CD8-positive, alpha-beta memory T cell (primary cell): ENCODE measurements at regions of chr15 and their contacts with region 1.

Region 1: GRCh38 chr15:40906091-40906990 is 12.1 kb downstream of the VPS18 start:
- DNase-seq: peak; percentile 63 to 77 (median 70)
- H3K4me3 ChIP-seq: peak overlapping the region; percentile 84
- H3K4me3 Mint-ChIP-seq: peak overlapping the region; percentile 81 to 91 (median 86)
- H3K27ac ChIP-seq: peak overlapping the region; percentile 59
- H3K27ac Mint-ChIP-seq: peak overlapping the region in 7 of 8 donors; percentile 35 to 95 (median 90)
- H3K4me1 ChIP-seq: peaks cover 26% of the 10 kb centered on the region
- H3K4me1 Mint-ChIP-seq: peaks cover 12 to 48% (median 25%) of the 10 kb centered on the region in 3 donors
- H3K27me3 ChIP-seq: no peaks in the 10 kb centered on the region
- H3K27me3 Mint-ChIP-seq: peaks cover 0 to 2% of the 10 kb centered on the region in 2 donors

Region 2: DNA sequence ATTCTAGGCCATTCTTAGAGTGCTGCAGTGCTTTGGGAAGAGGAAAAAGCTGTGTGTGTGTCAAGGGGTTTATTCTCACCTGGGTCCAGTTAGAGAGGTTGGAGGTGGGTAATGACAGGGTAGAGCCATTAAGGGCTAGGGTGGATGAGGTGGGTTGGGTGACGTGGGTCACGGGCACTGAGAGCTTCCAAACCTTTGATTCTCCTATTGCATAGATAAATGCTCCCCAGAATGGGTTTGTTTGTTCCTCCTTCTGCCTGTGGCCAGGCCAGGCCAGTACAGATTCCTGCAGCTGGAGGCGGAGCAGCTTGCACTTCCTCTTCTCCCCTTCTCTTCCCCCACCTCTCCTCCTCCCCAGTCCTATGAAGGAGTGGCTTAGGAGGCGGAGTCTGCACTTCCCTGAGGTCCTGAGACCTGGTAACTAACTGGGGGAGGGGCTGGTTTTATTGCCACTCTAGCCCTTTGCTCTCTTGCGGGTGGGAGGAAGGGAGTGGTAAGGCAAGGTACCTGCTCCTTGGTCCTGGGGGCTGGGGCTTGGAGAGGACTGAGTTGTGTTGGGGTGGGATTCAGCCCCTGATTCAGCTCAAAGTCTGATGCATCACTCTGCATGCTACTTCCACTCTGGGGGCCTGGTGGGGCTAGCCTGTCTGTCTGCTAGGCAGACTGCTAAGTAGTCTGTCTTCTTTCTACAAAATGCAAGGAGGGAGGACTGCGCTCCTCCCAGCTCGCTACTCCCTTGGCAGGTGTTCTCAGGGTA is 59.0 kb before region 1 on chr15:
- CTCF ChIA-PET with region 1: no interaction called
- POLR2A ChIA-PET with region 1: no interaction called
- DNase-seq: no peak
- H3K4me3 ChIP-seq: no peak overlapping the region
- H3K4me3 Mint-ChIP-seq: peak overlapping the region in 2 of 7 donors; percentile 25 to 71
- H3K27ac ChIP-seq: peak overlapping the region; percentile 59
- H3K27ac Mint-ChIP-seq: peak overlapping the region in 2 of 8 donors; percentile 36 to 91
- H3K4me1 ChIP-seq: peaks cover 17% of the 10 kb centered on the region
- H3K4me1 Mint-ChIP-seq: peaks cover 5 to 26% (median 11%) of the 10 kb centered on the region in 3 donors
- H3K27me3 ChIP-seq: no peaks in the 10 kb centered on the region
- H3K27me3 Mint-ChIP-seq: peaks cover 11% of the 10 kb centered on the region in 2 donors

Region 3: DNA sequence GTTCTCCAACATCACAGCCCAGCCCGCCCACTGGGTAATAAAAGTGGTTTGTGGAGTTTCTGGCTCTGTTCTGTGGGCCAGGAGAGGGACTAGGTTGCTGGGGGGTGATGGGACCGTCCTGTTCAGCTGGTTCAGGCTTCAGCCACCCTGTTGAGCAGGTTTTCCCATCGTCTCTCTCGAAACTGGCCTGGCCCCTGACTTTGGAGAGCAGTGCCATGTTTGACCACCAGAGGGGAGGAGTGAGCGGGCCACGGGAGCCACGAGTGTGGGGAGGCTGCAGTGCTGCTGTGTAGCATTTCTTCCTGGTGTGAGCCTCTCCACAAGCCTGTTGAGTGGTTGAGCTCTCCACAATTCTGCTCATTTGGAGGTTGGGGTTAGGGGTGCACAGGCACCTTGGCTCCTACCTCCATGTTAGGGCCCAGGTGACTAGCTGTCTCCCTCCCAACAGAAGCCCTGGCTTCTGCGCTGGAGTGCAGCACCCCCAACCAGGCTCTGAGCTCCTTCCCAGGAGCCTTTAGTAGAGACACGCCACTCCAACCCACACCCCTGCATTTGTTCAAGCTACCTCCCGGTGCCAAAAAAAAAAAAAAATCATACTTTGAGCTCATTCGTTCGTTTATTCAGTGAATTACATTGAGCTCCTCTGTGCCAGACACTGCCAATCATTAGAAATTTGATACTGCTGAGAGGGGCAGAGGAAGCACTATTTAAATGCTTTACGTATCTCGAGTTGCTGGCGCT is 48.6 kb before region 1 on chr15:
- CTCF ChIA-PET with region 1: interaction called, 25 read pairs
- POLR2A ChIA-PET with region 1: no interaction called
- DNase-seq: peak; percentile 65 to 83 (median 67)
- H3K4me3 ChIP-seq: no peak overlapping the region
- H3K4me3 Mint-ChIP-seq: no peak overlapping the region
- H3K27ac ChIP-seq: no peak overlapping the region
- H3K27ac Mint-ChIP-seq: peak overlapping the region in 3 of 8 donors; percentile 8 to 41 (median 24)
- H3K4me1 ChIP-seq: no peaks in the 10 kb centered on the region
- H3K4me1 Mint-ChIP-seq: peaks cover 6 to 15% (median 8%) of the 10 kb centered on the region in 3 donors
- H3K27me3 ChIP-seq: no peaks in the 10 kb centered on the region
- H3K27me3 Mint-ChIP-seq: peaks cover 2 to 11% of the 10 kb centered on the region in 2 donors

Region 4: GRCh38 chr15:40928821-40929659 is 22.7 kb after region 1 on chr15 and contains the start of gene DLL4:
- CTCF ChIA-PET with region 1: interaction called, 15 read pairs
- POLR2A ChIA-PET with region 1: interaction called, 5 read pairs
- DNase-seq: peak in 3 of 5 donors; percentile 37 to 57 (median 38)
- H3K4me3 ChIP-seq: peak within 1 kb of the TSS; percentile 67
- H3K4me3 Mint-ChIP-seq: peak within 1 kb of the TSS; percentile 77 to 92 (median 82)
- H3K27ac ChIP-seq: no peak within 1 kb of the TSS
- H3K27ac Mint-ChIP-seq: peak within 1 kb of the TSS in 2 of 8 donors; percentile 15 to 70
- H3K4me1 ChIP-seq: peaks cover 37% of the 10 kb centered on the region
- H3K4me1 Mint-ChIP-seq: peaks cover 36 to 68% (median 41%) of the 10 kb centered on the region in 3 donors
- H3K27me3 ChIP-seq: peaks cover 48% of the 10 kb centered on the region
- H3K27me3 Mint-ChIP-seq: peaks cover 52 to 68% of the 10 kb centered on the region in 2 donors
- total RNA-seq, gene DLL4: not detected

Region 5: GRCh38 chr15:40952901-40953712 is 46.8 kb after region 1 on chr15 and contains the start of gene CHAC1:
- CTCF ChIA-PET with region 1: interaction called, 14 read pairs
- POLR2A ChIA-PET with region 1: interaction called, 5 read pairs
- DNase-seq: peak; percentile 89 to 96 (median 93)
- H3K4me3 ChIP-seq: peak within 1 kb of the TSS; percentile 86
- H3K4me3 Mint-ChIP-seq: peak within 1 kb of the TSS; percentile 89 to 96 (median 92)
- H3K27ac ChIP-seq: peak within 1 kb of the TSS; percentile 61
- H3K27ac Mint-ChIP-seq: peak within 1 kb of the TSS; percentile 61 to 89 (median 72)
- H3K4me1 ChIP-seq: peaks cover 16% of the 10 kb centered on the region
- H3K4me1 Mint-ChIP-seq: peaks cover 11 to 20% (median 12%) of the 10 kb centered on the region in 3 donors
- H3K27me3 ChIP-seq: no peaks in the 10 kb centered on the region
- H3K27me3 Mint-ChIP-seq: peaks cover 3 to 5% of the 10 kb centered on the region in 2 donors
- total RNA-seq, gene CHAC1: 15.1 to 16.7 TPM

Region 6: GRCh38 chr15:41180206-41180789 is 274.0 kb after region 1 on chr15:
- CTCF ChIA-PET with region 1: interaction called, 73 read pairs
- POLR2A ChIA-PET with region 1: no interaction called
- DNase-seq: no peak
- H3K4me3 ChIP-seq: no peak overlapping the region
- H3K4me3 Mint-ChIP-seq: no peak overlapping the region
- H3K27ac ChIP-seq: no peak overlapping the region
- H3K27ac Mint-ChIP-seq: no peak overlapping the region
- H3K4me1 ChIP-seq: no peaks in the 10 kb centered on the region
- H3K4me1 Mint-ChIP-seq: no peaks in the 10 kb centered on the region
- H3K27me3 ChIP-seq: no peaks in the 10 kb centered on the region
- H3K27me3 Mint-ChIP-seq: peaks cover 0 to 7% of the 10 kb centered on the region in 2 donors